ENCODE measurements at regions of chr4 and their contacts with region 1.

Region 1: GRCh38 chr4:102734591-102735385 is 26.0 kb downstream of the MANBA start:
- DNase-seq: no peak

Region 2: DNA sequence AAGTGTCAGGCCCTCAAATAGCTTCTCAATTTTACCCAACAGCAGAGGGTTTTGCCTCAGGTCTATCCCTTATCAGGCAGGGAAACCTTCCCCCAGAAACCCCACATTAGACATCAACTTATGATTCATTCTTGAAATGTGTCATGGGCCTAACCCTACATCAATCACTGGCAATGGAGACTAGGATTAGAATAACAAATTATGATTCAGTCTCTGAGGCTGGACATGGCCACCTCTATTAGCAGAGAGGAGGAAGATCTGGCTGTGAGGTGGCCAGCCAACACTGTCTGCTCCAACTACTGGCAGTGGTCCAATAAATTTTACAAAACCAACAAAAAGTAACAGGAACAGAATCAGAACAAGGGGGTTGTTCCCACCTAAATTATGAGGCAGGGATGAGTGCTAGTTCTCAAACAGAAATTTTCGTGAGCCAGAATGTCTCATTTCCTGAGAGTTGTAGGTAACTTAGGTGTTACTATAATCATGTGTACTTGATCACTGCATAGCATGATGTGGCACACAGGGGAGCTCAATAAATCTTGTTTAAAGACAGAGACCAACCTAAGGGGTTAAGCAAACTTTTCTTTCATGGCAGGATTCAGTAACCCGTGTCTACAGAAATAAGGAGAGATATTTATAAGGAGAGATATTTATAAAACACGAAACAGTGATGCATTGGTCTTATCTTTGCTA is 106.8 kb before region 1 on chr4:
- CTCF ChIA-PET with region 1: no interaction called
- POLR2A ChIA-PET with region 1: no interaction called
- DNase-seq: no peak

Region 3: GRCh38 chr4:102760645-102761295 is 26.0 kb after region 1 on chr4 and contains the start of gene MANBA:
- CTCF ChIA-PET with region 1: interaction called, 3 read pairs
- POLR2A ChIA-PET with region 1: interaction called, 11 read pairs
- DNase-seq: peak; percentile 90

Region 4: DNA sequence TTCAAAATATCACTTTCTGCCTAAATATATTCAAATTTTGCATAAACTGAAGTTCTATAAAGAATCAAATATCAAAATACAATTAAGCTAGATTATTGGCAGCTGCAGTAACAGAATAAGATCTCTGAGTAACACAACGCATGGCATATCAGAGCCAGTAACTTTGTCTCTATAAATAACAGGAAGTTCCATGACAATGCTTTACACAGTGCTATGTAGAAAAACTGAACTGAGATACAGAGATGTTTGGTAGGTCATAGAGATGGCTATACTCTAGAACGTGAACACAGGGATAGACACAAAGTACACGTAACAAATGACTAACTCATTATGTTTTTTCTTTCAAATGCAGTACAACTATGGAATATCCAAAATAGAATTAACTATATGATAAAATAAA is 74.4 kb after region 1 on chr4:
- CTCF ChIA-PET with region 1: no interaction called
- POLR2A ChIA-PET with region 1: no interaction called
- DNase-seq: no peak

Region 5: GRCh38 chr4:102836596-102836995 is 101.8 kb after region 1 on chr4:
- CTCF ChIA-PET with region 1: no interaction called
- POLR2A ChIA-PET with region 1: no interaction called
- DNase-seq: no peak